Endothelial cell of umbilical vein (primary cell): ENCODE measurements at regions of chr18 and their contacts with region 1.

Region 1: GRCh38 chr18:63439334-63439733 is 17.1 kb upstream of the VPS4B start:
- DNase-seq: peak; percentile 78
- H3K4me3 ChIP-seq: no peak overlapping the region
- H3K27ac ChIP-seq: no peak overlapping the region
- H3K4me1 ChIP-seq: no peaks in the 10 kb centered on the region
- H3K27me3 ChIP-seq: peaks cover 4 to 12% of the 10 kb centered on the region in 2 experiments
- CTCF ChIP-seq: peak; percentile 63 to 71
- POLR2A ChIP-seq: no peak

Region 2: DNA sequence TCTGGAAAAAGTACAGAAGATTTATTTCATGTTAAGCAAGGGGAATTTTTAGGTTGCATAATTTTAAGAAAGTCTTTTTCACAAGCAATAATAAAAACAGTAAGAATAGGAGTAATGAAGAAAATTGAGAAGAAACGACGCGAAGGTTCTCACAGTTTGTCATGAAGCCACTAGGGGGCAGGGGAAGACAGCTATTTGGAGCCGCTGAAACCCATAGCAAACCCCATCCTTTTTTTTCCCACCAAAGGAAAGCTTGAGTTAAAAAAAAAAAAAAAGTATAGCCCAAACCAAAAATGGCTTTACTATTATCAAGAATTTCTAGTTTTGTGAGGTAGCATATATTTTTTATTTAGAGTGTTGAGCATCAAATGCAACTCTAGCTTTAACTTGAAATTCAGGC is 423.1 kb before region 1 on chr18:
- CTCF ChIA-PET with region 1: interaction called, 102 read pairs
- POLR2A ChIA-PET with region 1: no interaction called
- dilution Hi-C with region 1: no loop called
- intact Hi-C with region 1: loop called (anchors 1 kb)
- DNase-seq: peak; percentile 39
- H3K4me3 ChIP-seq: no peak overlapping the region
- H3K27ac ChIP-seq: no peak overlapping the region
- H3K4me1 ChIP-seq: no peaks in the 10 kb centered on the region
- H3K27me3 ChIP-seq: peaks cover 18 to 21% of the 10 kb centered on the region in 2 experiments
- CTCF ChIP-seq: peak; percentile 71 to 75
- POLR2A ChIP-seq: no peak

Region 3: DNA sequence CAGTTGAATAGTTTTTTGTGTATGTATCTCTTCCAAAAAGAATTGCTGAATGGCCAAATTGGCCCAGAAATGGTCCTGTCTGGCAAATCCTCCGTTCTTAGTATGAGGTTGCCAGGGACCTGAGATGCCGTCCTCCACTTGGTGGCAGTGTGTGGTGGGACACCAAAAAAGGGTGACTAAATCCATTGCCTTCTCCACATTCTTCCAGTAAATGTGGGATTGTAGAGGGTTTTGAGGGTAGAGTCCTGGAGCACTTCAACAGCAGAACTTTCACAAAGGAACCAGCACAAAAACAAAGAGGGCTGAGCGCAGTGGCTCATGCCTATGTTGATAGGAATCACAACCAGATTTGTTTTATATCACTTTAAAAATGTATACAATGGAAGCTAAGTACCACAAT is 319.7 kb before region 1 on chr18:
- CTCF ChIA-PET with region 1: interaction called, 12 read pairs
- POLR2A ChIA-PET with region 1: no interaction called
- dilution Hi-C with region 1: no loop called
- intact Hi-C with region 1: no loop called
- DNase-seq: peak; percentile 37
- H3K4me3 ChIP-seq: no peak overlapping the region
- H3K27ac ChIP-seq: no peak overlapping the region
- H3K4me1 ChIP-seq: no peaks in the 10 kb centered on the region
- H3K27me3 ChIP-seq: peaks cover 7 to 47% of the 10 kb centered on the region in 2 experiments
- CTCF ChIP-seq: peak in 1 of 2 donors; percentile 35
- POLR2A ChIP-seq: no peak

Region 4: GRCh38 chr18:63237881-63238667 is 201.3 kb before region 1 on chr18:
- CTCF ChIA-PET with region 1: no interaction called
- POLR2A ChIA-PET with region 1: no interaction called
- dilution Hi-C with region 1: no loop called
- intact Hi-C with region 1: loop called (anchors 10 kb)
- DNase-seq: peak; percentile 84
- H3K4me3 ChIP-seq: no peak overlapping the region
- H3K27ac ChIP-seq: peak overlapping the region; percentile 21
- H3K4me1 ChIP-seq: peaks cover 7% of the 10 kb centered on the region
- H3K27me3 ChIP-seq: no peaks in the 10 kb centered on the region
- CTCF ChIP-seq: no peak
- POLR2A ChIP-seq: no peak

Region 5: GRCh38 chr18:63339920-63340484 is 99.3 kb before region 1 on chr18:
- CTCF ChIA-PET with region 1: interaction called, 34 read pairs
- POLR2A ChIA-PET with region 1: no interaction called
- dilution Hi-C with region 1: no loop called
- intact Hi-C with region 1: loop called (anchors 1 kb)
- DNase-seq: peak; percentile 40
- H3K4me3 ChIP-seq: no peak overlapping the region
- H3K27ac ChIP-seq: no peak overlapping the region
- H3K4me1 ChIP-seq: no peaks in the 10 kb centered on the region
- H3K27me3 ChIP-seq: no peaks in the 10 kb centered on the region
- CTCF ChIP-seq: peak; percentile 46 to 49
- POLR2A ChIP-seq: no peak